Activated naive CD8-positive, alpha-beta T cell treated with anti-CD3 and anti-CD28 coated beads, Interleukin-2, amount 10 ng/mL, durations not matched to agents 7 days and 5 days (primary cell): ENCODE measurements at regions of chr10 and their contacts with region 1.

Region 1: GRCh38 chr10:27241652-27242472 is 1.3 kb upstream of the ACBD5 start:
- DNase-seq: peak; percentile 91
- ATAC-seq: peak; percentile 59
- H3K4me3 Mint-ChIP-seq: peak overlapping the region; percentile 95
- H3K27ac Mint-ChIP-seq: peak overlapping the region; percentile 98
- H3K4me1 Mint-ChIP-seq: peaks cover 21% of the 10 kb centered on the region
- H3K27me3 Mint-ChIP-seq: no peaks in the 10 kb centered on the region

Region 2: DNA sequence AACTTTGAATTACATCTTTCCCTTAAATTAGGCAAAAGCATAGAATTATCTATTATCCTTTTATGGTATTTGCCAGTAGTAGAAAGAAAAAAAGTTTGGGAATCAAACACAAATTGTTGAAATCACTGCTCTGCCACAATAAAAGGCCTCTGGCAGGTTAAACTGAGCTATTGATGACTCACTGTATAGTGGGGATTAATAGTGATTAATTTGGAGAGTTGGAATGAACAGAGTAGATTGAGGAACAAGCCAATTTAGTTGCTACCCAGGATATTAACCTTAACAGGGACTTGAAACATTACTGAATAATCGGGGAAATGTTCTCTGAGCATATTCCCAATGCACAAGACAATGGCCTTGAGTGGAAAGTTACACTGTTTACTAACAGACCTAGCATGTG is 53.6 kb before region 1 on chr10:
- POLR2A ChIA-PET with region 1: no interaction called
- DNase-seq: no peak
- ATAC-seq: no peak
- H3K4me3 Mint-ChIP-seq: no peak overlapping the region
- H3K27ac Mint-ChIP-seq: no peak overlapping the region
- H3K4me1 Mint-ChIP-seq: peaks cover 6% of the 10 kb centered on the region
- H3K27me3 Mint-ChIP-seq: no peaks in the 10 kb centered on the region

Region 3: DNA sequence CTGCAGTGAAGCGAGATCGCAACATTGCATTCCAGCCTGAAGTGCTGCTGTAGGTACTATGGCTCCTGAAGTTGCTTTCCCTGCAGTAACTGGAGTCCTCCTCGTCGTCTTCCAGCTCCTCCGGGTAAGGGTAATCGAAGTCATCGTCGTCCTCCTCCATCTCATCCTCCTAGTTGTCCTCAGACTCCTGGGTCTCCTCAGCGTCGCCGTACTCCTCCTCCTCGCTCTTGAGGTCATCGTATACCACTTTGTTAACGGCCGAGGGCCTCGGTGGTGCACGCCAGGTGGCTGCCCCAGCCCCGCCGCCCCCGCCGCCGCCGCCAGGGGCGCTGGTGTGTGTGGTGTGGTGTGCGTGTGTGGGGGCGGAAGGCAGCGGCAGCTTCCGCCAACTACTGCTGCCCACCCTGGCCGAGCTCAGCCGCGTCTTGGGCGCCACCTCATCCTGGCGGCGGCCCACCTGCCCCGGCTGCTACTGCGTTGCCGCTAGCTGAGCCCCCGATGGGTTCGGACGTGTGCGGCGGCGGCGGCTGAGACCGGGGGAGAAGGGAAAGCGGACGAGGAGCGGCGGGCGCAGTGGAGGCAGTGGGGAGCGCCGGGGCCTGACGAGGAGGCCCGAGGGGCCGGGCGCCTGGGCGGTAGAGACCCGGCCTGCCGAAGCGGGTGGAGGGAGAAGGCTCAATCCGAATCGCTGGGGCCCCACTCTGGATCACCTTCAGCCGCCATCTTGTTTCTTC is 10.6 kb after region 1 on chr10:
- POLR2A ChIA-PET with region 1: interaction called, 26 read pairs
- DNase-seq: peak; percentile 93
- ATAC-seq: peak; percentile 94
- H3K4me3 Mint-ChIP-seq: peak overlapping the region; percentile 82
- H3K27ac Mint-ChIP-seq: peak overlapping the region; percentile 86
- H3K4me1 Mint-ChIP-seq: peaks cover 10% of the 10 kb centered on the region
- H3K27me3 Mint-ChIP-seq: peaks cover under 1% of the 10 kb centered on the region

Region 4: DNA sequence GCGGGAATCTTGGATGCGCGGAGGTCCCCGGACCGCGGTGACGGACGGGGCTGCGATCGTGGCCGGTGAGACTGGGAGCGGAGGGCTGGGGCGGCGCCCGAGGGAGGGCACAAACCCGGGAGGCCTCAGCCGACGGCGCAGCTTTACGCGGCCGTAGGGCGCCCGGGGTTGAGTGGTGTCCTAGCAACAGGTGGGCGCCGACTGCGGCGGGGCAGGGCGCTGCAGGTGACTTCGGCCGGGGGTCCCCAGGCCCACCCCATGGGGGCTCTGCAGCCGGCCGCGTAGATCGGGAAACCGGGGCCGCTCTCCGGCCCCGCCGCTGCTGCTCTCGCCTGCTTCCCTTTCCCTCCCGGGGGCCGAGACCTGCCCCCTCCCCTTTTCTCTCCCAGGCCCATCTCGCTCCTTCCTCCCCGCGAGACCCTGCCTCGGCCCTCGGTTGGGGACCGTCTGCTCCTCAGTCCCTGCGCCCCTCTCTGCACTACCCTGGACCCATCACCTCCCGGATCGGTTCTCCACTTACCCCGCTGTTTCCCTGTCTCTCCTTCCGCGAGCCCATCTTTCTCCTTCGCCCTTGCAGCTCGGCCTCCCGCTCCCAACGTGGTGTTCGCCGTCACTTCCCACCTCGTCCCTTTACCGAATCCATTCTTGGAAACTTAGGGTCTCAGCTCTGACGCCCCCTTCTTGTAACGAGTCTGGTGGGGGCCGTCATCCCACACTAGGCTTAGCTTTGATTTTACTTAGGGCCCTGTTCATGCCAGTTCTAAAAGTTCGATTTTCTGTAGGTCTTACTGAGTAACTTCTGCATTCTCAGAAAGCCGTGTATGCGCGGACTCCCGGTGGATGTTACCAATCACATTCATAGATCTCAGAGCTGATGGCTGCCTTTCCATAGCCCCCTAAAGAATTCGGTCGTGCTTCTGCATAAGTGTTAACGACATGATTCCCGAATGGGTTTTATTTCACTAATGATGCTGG is 17.3 kb after region 1 on chr10:
- POLR2A ChIA-PET with region 1: interaction called, 20 read pairs
- DNase-seq: peak; percentile 48
- ATAC-seq: peak; percentile 43
- H3K4me3 Mint-ChIP-seq: peak overlapping the region; percentile 86
- H3K27ac Mint-ChIP-seq: no peak overlapping the region
- H3K4me1 Mint-ChIP-seq: peaks cover 19% of the 10 kb centered on the region
- H3K27me3 Mint-ChIP-seq: peaks cover 54% of the 10 kb centered on the region